ENCODE measurements at regions of chr5 and their contacts with region 1.

Region 1: DNA sequence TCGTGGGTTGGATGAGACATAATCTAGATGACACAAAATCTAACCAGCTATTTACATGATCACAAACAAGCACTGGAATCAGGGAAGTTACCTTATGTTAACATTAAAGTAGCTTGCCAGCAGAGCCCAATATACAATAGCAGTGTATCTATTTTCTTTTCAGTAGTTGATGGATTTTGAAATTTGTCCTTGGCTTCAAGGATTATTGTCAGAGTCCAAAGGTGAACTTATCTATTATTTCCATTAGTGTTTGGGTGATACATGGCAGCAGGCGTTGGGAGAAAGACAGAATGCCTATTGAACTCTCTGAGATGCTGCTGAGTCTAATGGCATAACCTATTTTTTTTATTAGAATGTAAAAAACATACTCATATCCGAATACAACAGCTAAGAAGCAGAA is 223.2 kb upstream of the ACTBL2 start:
- DNase-seq: no peak
- H3K4me3 ChIP-seq: no peak overlapping the region
- H3K27ac ChIP-seq: no peak overlapping the region
- H3K4me1 ChIP-seq: no peaks in the 10 kb centered on the region
- CTCF ChIP-seq: no peak

Region 2: GRCh38 chr5:57684299-57684702 is 21.5 kb before region 1 on chr5:
- CTCF ChIA-PET with region 1: no interaction called
- POLR2A ChIA-PET with region 1: interaction called, 11 read pairs
- intact Hi-C with region 1: no loop called
- DNase-seq: no peak
- H3K4me3 ChIP-seq: no peak overlapping the region
- H3K27ac ChIP-seq: no peak overlapping the region
- H3K4me1 ChIP-seq: no peaks in the 10 kb centered on the region
- CTCF ChIP-seq: no peak